Mammary epithelial cell (primary cell): ENCODE measurements at regions of chr17 and their contacts with region 1.

Region 1: GRCh38 chr17:48374650-48375230 is 55.3 kb downstream of the SKAP1 start:
- DNase-seq: peak; percentile 1
- H3K4me3 ChIP-seq: no peak overlapping the region
- H3K27ac ChIP-seq: no peak overlapping the region
- H3K4me1 ChIP-seq: no peaks in the 10 kb centered on the region
- H3K27me3 ChIP-seq: peaks cover 5% of the 10 kb centered on the region
- CTCF ChIP-seq: peak; percentile 43 to 58

Region 2: GRCh38 chr17:48153691-48154358 is 220.9 kb before region 1 on chr17:
- CTCF ChIA-PET with region 1: no interaction called
- dilution Hi-C with region 1: no loop called
- in situ Hi-C with region 1: no loop called
- intact Hi-C with region 1: loop called (anchors 5 kb)
- DNase-seq: no peak
- H3K4me3 ChIP-seq: no peak overlapping the region
- H3K27ac ChIP-seq: no peak overlapping the region
- H3K4me1 ChIP-seq: no peaks in the 10 kb centered on the region
- H3K27me3 ChIP-seq: peaks cover 4% of the 10 kb centered on the region
- CTCF ChIP-seq: peak; percentile 32 to 53

Region 3: DNA sequence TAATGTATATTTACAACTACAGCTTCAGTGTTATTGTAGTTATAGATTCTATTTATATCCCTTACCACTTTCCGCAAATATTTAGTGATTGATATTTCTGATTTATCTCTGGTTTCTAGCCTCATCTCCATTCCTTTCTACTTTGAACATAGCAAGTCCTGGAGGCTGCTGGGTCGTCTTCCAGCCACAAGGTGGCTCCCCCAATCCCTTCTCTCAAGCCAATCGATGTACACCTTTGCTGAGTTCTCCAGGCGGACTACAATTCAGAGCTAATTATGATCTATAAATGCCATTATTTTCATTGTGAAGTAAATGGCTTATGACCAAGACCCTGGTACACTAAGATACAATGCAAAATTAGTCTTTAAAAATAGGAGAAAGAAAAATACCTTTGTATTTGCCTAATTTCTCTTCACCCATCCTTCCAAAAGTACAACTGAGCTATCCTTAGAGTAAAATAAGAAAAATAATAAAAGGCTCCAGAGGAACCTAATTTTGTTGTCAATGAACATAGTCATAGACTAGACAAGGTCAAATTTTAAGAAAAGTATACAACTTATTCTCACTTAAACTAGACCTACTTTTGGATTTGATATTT is 66.8 kb before region 1 on chr17:
- CTCF ChIA-PET with region 1: no interaction called
- dilution Hi-C with region 1: no loop called
- in situ Hi-C with region 1: no loop called
- intact Hi-C with region 1: loop called (anchors 5 kb)
- DNase-seq: peak; percentile 37
- H3K4me3 ChIP-seq: no peak overlapping the region
- H3K27ac ChIP-seq: no peak overlapping the region
- H3K4me1 ChIP-seq: no peaks in the 10 kb centered on the region
- H3K27me3 ChIP-seq: peaks cover 20% of the 10 kb centered on the region
- CTCF ChIP-seq: peak; percentile 91 to 96